ENCODE measurements at regions of chr3 and their contacts with region 1.

Region 1: GRCh38 chr3:141192345-141192744 is 39.3 kb upstream of the PXYLP1 start:
- DNase-seq: peak; percentile 93 to 99 (median 97)
- ATAC-seq: peak; percentile 100
- H3K4me3 ChIP-seq: no peak overlapping the region
- H3K4me3 Mint-ChIP-seq: no peak overlapping the region
- H3K27ac ChIP-seq: no peak overlapping the region
- H3K27ac Mint-ChIP-seq: no peak overlapping the region
- H3K4me1 ChIP-seq: no peaks in the 10 kb centered on the region
- H3K4me1 Mint-ChIP-seq: peaks cover 11% of the 10 kb centered on the region
- H3K27me3 ChIP-seq: no peaks in the 10 kb centered on the region
- H3K27me3 Mint-ChIP-seq: peaks cover 2% of the 10 kb centered on the region
- CTCF ChIP-seq: peak; percentile 93

Region 2: GRCh38 chr3:140898340-140899180 is 293.8 kb before region 1 on chr3:
- CTCF ChIA-PET with region 1: interaction called, 26 read pairs
- POLR2A ChIA-PET with region 1: interaction called, 4 read pairs
- intact Hi-C with region 1: loop called in 1 of 2 experiments (anchors 1 kb)
- DNase-seq: peak in 2 of 9 experiments; percentile 45 to 58
- ATAC-seq: peak; percentile 58
- H3K4me3 ChIP-seq: no peak overlapping the region
- H3K4me3 Mint-ChIP-seq: no peak overlapping the region
- H3K27ac ChIP-seq: no peak overlapping the region
- H3K27ac Mint-ChIP-seq: no peak overlapping the region
- H3K4me1 ChIP-seq: no peaks in the 10 kb centered on the region
- H3K4me1 Mint-ChIP-seq: no peaks in the 10 kb centered on the region
- H3K27me3 ChIP-seq: no peaks in the 10 kb centered on the region
- H3K27me3 Mint-ChIP-seq: peaks cover 19% of the 10 kb centered on the region
- CTCF ChIP-seq: peak; percentile 72

Region 3: DNA sequence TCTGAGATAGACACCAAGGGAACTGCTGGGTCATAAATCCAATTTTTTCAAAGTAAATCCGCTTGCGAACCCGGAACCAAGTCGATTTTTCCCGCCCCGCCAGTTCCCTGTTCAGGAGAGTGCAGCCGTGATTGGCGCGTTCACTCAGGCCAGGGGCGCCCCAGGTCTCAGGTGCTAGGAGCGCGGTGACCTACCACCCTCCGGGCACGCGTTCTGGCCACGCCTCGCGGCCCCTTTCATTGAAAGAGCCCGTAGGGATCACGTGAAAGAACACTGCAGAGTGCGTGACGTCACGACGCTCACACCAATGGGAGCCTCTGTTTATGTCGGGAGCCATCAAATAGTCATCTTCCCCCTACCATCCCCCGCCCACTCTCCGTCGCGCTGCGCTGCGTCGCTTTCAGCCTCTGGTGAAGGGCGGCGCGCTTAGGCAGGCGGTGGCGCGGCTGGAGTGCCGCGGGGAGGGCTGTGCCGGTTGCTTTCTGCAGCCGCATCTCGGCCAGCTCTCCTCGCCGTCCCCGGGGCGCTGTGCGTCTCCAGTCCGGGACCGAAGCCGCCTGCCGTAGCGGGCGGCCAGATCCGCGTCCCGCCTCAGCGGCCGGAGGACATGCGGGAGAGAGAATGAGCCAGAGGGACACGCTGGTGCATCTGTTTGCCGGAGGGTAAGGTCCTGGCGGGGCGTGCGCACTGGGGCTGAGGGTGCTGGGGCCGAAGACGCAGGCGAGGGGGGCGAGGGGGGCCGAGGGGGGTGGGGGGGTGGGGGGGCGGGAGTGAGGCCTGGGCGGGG is 250.7 kb before region 1 on chr3 and contains the start of gene SLC25A36:
- CTCF ChIA-PET with region 1: no interaction called
- POLR2A ChIA-PET with region 1: no interaction called
- intact Hi-C with region 1: loop called in 1 of 2 experiments (anchors 5 kb)
- DNase-seq: peak; percentile 90 to 100 (median 96)
- ATAC-seq: peak; percentile 96
- H3K4me3 ChIP-seq: peak within 1 kb of the TSS; percentile 71 to 78
- H3K4me3 Mint-ChIP-seq: peak within 1 kb of the TSS; percentile 90
- H3K27ac ChIP-seq: peak within 1 kb of the TSS; percentile 85 to 88
- H3K27ac Mint-ChIP-seq: peak within 1 kb of the TSS; percentile 99
- H3K4me1 ChIP-seq: peaks cover 14% of the 10 kb centered on the region
- H3K4me1 Mint-ChIP-seq: peaks cover 36% of the 10 kb centered on the region
- H3K27me3 ChIP-seq: no peaks in the 10 kb centered on the region
- H3K27me3 Mint-ChIP-seq: no peaks in the 10 kb centered on the region
- CTCF ChIP-seq: no peak
- total RNA-seq, gene SLC25A36: 156 to 165 TPM

Region 4: DNA sequence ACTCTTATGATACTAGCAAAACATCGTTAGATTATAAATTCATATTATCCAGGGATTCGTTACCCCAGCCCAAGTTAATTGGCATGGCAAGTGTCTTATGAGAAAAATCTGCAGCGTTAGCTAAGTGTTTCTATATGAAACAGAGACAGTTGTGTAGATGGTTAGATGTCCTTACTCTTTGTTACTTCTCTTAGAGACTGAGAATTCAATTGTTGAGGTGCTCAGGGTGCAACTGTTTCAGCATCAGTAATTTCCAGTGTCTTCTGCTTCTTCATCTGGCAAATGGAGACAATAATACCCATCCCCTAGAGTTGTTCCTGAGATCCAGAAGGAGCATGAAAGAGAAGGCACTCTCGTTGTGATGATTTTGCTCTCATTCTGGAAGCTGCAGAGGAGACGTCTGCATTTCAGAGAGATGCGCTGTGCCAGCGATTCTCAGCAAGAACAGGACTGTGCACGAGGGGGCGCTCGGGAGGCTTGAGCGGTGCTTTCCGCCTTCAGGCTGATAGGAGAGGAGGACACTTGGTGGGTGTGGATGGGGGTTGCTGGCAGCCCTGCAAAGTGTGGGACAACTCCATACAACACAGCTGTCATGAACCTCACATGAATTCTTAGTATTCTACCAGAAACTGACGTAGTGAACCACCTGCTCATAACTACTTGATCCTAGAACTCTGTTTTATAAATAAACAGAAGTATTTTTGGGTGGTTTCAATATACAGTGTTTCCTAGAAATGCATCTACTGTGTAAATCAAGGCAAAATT is 180.9 kb before region 1 on chr3:
- CTCF ChIA-PET with region 1: interaction called, 44 read pairs
- POLR2A ChIA-PET with region 1: no interaction called
- intact Hi-C with region 1: loop called in 1 of 2 experiments (anchors 1 kb)
- DNase-seq: peak; percentile 48 to 85 (median 73)
- ATAC-seq: peak; percentile 99
- H3K4me3 ChIP-seq: no peak overlapping the region
- H3K4me3 Mint-ChIP-seq: no peak overlapping the region
- H3K27ac ChIP-seq: no peak overlapping the region
- H3K27ac Mint-ChIP-seq: no peak overlapping the region
- H3K4me1 ChIP-seq: peaks cover 5% of the 10 kb centered on the region
- H3K4me1 Mint-ChIP-seq: peaks cover 5% of the 10 kb centered on the region
- H3K27me3 ChIP-seq: peaks cover 0 to 6% of the 10 kb centered on the region in 2 experiments
- H3K27me3 Mint-ChIP-seq: peaks cover 22% of the 10 kb centered on the region
- CTCF ChIP-seq: peak; percentile 71

Region 5: GRCh38 chr3:141231101-141231935 is 39.0 kb after region 1 on chr3 and contains the start of gene PXYLP1:
- CTCF ChIA-PET with region 1: interaction called, 4 read pairs
- POLR2A ChIA-PET with region 1: no interaction called
- intact Hi-C with region 1: loop called in 1 of 2 experiments (anchors 2 kb)
- DNase-seq: peak; percentile 78 to 95 (median 89)
- ATAC-seq: peak; percentile 90
- H3K4me3 ChIP-seq: peak within 1 kb of the TSS; percentile 89 to 94
- H3K4me3 Mint-ChIP-seq: peak within 1 kb of the TSS; percentile 91
- H3K27ac ChIP-seq: peak within 1 kb of the TSS; percentile 87 to 94
- H3K27ac Mint-ChIP-seq: peak within 1 kb of the TSS; percentile 98
- H3K4me1 ChIP-seq: peaks cover 42% of the 10 kb centered on the region
- H3K4me1 Mint-ChIP-seq: peaks cover 51% of the 10 kb centered on the region
- H3K27me3 ChIP-seq: no peaks in the 10 kb centered on the region
- H3K27me3 Mint-ChIP-seq: no peaks in the 10 kb centered on the region
- CTCF ChIP-seq: peak; percentile 66
- total RNA-seq, gene PXYLP1: 14.5 to 21.8 TPM

Region 6: DNA sequence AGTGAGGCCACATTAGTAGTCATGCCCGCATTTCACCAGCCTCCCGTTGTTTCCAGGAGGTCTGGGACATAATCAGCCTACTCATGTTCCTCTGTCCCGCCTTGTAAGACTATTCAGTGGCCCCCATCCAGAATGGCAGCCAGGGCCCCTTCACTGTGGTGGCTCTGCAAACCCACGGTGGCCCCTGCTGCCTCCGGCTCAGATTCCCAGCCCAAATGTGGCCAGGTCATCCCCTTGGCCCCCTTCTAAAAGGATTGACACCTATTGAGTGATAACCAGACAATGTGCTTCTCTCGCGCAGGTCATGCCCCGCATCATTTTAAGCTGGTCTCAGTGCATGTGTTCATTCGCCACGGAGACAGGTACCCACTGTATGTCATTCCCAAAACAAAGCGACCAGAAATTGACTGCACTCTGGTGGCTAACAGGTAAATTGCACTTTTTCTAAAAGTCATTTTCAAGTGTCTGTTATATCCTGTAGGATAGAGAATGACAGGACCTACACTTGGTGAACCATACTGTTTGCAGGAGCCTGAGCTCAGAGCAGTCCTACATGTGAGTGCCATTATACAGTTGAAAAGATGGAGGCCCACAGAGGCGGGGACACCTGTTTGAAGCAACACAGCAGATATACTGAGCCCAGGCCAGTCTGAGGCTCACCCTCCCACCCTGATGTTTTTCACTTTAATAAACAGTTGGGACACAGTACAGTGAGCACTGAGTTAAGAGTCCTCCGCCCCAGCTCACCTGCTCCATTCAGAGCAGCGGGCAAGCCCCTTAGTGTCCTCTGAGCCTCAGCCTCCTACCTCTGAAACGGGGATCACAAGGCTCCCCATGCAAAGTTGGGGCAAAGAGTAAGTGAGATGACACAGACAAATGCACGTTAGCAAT is 87.0 kb after region 1 on chr3:
- CTCF ChIA-PET with region 1: no interaction called
- POLR2A ChIA-PET with region 1: no interaction called
- intact Hi-C with region 1: loop called in 1 of 2 experiments (anchors 1 kb)
- DNase-seq: peak in 3 of 9 experiments; percentile 30 to 65 (median 46)
- ATAC-seq: peak; percentile 89
- H3K4me3 ChIP-seq: no peak overlapping the region
- H3K4me3 Mint-ChIP-seq: no peak overlapping the region
- H3K27ac ChIP-seq: no peak overlapping the region
- H3K27ac Mint-ChIP-seq: peak overlapping the region; percentile 32
- H3K4me1 ChIP-seq: peaks cover 18% of the 10 kb centered on the region
- H3K4me1 Mint-ChIP-seq: peaks cover 23% of the 10 kb centered on the region
- H3K27me3 ChIP-seq: no peaks in the 10 kb centered on the region
- H3K27me3 Mint-ChIP-seq: no peaks in the 10 kb centered on the region
- CTCF ChIP-seq: peak; percentile 59